Activated CD8-positive, alpha-beta memory T cell treated with anti-CD3 and anti-CD28 coated beads, Interleukin-2, amount 10 ng/mL, durations not matched to agents 7 days and 5 days (primary cell): ENCODE measurements at regions of chr10 and their contacts with region 1.

Region 1: DNA sequence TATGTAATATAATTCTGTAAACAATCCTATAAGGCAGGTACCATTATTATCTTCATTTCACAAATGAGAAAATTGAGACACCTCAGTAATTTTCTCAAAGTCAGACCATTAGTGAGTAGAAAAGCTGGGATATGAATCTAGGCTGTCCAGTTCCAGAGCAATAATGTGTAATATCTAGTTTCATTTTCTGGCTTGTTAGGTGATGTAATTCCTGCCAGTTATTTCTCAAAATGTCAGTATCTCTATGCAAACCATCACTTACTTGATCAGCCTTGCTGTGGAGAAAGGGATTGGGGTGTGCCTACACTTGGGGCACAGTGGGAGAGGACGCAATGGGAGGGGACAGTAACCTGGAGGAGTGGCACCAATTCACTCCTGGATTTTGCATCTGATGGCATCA is 157.5 kb downstream of the LYZL1 start:
- DNase-seq: no peak
- ATAC-seq: no peak
- H3K4me3 Mint-ChIP-seq: no peak overlapping the region
- H3K27ac Mint-ChIP-seq: peak overlapping the region; percentile 55
- H3K4me1 Mint-ChIP-seq: peaks cover 21% of the 10 kb centered on the region
- H3K27me3 Mint-ChIP-seq: no peaks in the 10 kb centered on the region

Region 2: GRCh38 chr10:29482591-29483431 is 36.5 kb after region 1 on chr10:
- CTCF ChIA-PET with region 1: interaction called, 13 read pairs
- DNase-seq: peak; percentile 83
- ATAC-seq: peak; percentile 94
- H3K4me3 Mint-ChIP-seq: peak overlapping the region; percentile 49
- H3K27ac Mint-ChIP-seq: peak overlapping the region; percentile 82
- H3K4me1 Mint-ChIP-seq: peaks cover 64% of the 10 kb centered on the region
- H3K27me3 Mint-ChIP-seq: no peaks in the 10 kb centered on the region

Region 3: DNA sequence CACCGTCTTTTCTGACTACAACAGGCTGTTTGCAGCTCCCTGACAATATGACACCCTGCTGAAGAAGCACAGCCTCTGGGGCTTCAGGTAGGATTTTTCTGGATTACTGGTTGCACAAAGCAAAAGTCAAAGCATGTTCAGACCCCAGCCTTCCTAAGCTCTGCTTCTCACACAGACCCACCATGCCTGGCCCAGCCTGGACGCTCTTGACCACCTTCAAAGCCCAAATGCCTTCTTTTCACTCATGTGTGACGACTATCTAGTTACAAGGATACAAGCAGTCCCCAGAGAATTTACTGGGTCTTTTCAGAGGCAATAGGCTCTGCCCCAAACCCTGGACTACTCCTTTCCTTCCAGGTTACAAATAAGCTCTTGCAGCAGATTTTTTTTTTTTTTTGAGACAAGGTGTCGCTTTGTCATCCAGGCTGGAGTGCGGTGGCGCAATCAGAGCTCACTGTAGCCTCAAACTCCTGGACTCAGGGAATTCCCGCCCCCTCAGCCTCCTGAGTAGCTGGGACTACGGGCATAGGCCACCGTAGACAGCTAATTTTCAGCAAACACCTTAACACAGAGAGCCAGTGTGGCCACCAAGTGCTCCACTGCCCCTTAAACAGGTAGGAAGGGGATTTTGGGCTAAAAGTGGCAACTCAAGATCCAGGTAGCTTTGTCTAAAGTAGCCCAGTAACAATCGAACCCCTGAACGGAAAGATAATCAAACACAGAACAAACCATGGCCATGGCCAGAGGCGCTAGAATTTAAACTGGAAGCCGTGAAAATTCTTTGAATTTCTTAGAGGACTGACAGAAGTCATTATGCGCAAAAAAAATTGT is 172.2 kb after region 1 on chr10:
- CTCF ChIA-PET with region 1: no interaction called
- DNase-seq: no peak
- ATAC-seq: no peak
- H3K4me3 Mint-ChIP-seq: no peak overlapping the region
- H3K27ac Mint-ChIP-seq: no peak overlapping the region
- H3K4me1 Mint-ChIP-seq: no peaks in the 10 kb centered on the region
- H3K27me3 Mint-ChIP-seq: no peaks in the 10 kb centered on the region

Region 4: GRCh38 chr10:30059209-30060107 is 613.1 kb after region 1 on chr10 and contains the start of gene JCAD:
- CTCF ChIA-PET with region 1: no interaction called
- DNase-seq: peak; percentile 61
- ATAC-seq: peak; percentile 91
- H3K4me3 Mint-ChIP-seq: peak within 1 kb of the TSS; percentile 57
- H3K27ac Mint-ChIP-seq: no peak within 1 kb of the TSS
- H3K4me1 Mint-ChIP-seq: peaks cover 9% of the 10 kb centered on the region
- H3K27me3 Mint-ChIP-seq: peaks cover 89% of the 10 kb centered on the region
- total RNA-seq, gene JCAD: 0.16 to 0.58 TPM